B cell (primary cell): ENCODE measurements at regions of chr5 and their contacts with region 1.

Region 1: DNA sequence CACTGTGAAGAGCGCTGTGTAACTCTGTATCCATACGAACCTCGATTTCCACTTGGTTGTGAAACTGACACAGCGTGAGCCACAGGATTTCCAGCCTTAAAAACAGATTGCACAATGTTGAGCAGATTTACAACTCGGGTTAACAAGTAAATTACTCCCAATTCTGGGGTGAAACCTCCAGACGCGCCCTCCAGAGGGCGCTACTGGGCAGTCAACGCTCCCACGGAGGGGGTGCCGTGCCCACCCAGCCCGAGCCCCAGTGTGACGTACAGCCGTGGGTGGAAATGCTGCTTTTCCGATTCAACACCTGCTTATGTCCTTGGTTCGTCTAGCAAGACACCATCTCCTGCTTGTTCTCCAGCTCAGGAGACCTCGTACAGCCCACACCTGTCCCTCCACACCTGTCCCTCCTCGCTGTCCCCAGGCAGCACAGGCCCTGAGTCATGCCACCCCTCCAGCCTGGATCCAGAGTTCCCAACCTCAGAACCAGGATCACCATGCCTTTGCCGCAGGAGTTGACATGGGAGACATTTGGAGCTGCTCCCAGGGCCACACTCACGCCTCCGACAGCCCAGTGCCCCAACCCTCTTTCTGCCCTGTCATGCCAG is 34.4 kb upstream of the SLC6A3 start:
- DNase-seq: peak; percentile 89
- ATAC-seq: peak; percentile 64
- H3K4me3 ChIP-seq: no peak overlapping the region
- H3K4me3 Mint-ChIP-seq: peak overlapping the region; percentile 76
- H3K27ac ChIP-seq: peak overlapping the region; percentile 66 to 84
- H3K27ac Mint-ChIP-seq: peak overlapping the region; percentile 94
- H3K4me1 ChIP-seq: peaks cover 48 to 55% of the 10 kb centered on the region in 2 donors
- H3K4me1 Mint-ChIP-seq: peaks cover 52% of the 10 kb centered on the region
- H3K27me3 ChIP-seq: no peaks in the 10 kb centered on the region
- H3K27me3 Mint-ChIP-seq: no peaks in the 10 kb centered on the region
- CTCF ChIP-seq: peak; percentile 88

Region 2: DNA sequence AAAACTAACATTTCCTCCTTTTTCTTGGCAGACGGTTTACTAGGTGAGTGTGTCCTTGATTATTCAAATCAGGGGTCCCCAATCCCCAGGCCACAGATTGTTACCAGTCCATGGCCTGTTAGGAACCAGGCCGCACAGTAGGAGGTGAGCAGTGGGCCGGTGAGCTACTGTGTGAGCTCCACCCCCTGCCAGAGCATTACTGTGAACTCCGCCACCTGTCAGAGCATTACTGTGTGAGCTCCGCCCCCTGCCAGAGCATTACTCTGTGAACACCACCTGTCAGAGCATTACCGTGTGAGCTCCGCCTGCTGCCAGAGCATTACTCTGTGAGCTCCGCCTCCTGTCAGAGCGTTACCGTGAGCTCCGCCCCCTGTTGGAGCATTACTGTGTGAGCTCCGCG is 1222.5 kb before region 1 on chr5:
- CTCF ChIA-PET with region 1: no interaction called
- POLR2A ChIA-PET with region 1: no interaction called
- intact Hi-C with region 1: no loop called
- DNase-seq: no peak
- ATAC-seq: no peak
- H3K4me3 ChIP-seq: no peak overlapping the region
- H3K4me3 Mint-ChIP-seq: no peak overlapping the region
- H3K27ac ChIP-seq: no peak overlapping the region
- H3K27ac Mint-ChIP-seq: no peak overlapping the region
- H3K4me1 ChIP-seq: peaks cover 0 to 2% of the 10 kb centered on the region in 2 donors
- H3K4me1 Mint-ChIP-seq: peaks cover 7% of the 10 kb centered on the region
- H3K27me3 ChIP-seq: no peaks in the 10 kb centered on the region
- H3K27me3 Mint-ChIP-seq: no peaks in the 10 kb centered on the region
- CTCF ChIP-seq: no peak

Region 3: GRCh38 chr5:1494780-1495524 is 15.3 kb after region 1 on chr5:
- CTCF ChIA-PET with region 1: interaction called, 27 read pairs
- POLR2A ChIA-PET with region 1: interaction called, 17 read pairs
- intact Hi-C with region 1: no loop called
- DNase-seq: peak; percentile 91
- ATAC-seq: peak; percentile 72
- H3K4me3 ChIP-seq: peak overlapping the region in 4 of 5 experiments; percentile 41 to 60 (median 55)
- H3K4me3 Mint-ChIP-seq: peak overlapping the region; percentile 87
- H3K27ac ChIP-seq: peak overlapping the region; percentile 95 to 96
- H3K27ac Mint-ChIP-seq: peak overlapping the region; percentile 98
- H3K4me1 ChIP-seq: peaks cover 90 to 99% of the 10 kb centered on the region in 2 donors
- H3K4me1 Mint-ChIP-seq: peaks cover 99% of the 10 kb centered on the region
- H3K27me3 ChIP-seq: no peaks in the 10 kb centered on the region
- H3K27me3 Mint-ChIP-seq: no peaks in the 10 kb centered on the region
- CTCF ChIP-seq: peak; percentile 16

Region 4: DNA sequence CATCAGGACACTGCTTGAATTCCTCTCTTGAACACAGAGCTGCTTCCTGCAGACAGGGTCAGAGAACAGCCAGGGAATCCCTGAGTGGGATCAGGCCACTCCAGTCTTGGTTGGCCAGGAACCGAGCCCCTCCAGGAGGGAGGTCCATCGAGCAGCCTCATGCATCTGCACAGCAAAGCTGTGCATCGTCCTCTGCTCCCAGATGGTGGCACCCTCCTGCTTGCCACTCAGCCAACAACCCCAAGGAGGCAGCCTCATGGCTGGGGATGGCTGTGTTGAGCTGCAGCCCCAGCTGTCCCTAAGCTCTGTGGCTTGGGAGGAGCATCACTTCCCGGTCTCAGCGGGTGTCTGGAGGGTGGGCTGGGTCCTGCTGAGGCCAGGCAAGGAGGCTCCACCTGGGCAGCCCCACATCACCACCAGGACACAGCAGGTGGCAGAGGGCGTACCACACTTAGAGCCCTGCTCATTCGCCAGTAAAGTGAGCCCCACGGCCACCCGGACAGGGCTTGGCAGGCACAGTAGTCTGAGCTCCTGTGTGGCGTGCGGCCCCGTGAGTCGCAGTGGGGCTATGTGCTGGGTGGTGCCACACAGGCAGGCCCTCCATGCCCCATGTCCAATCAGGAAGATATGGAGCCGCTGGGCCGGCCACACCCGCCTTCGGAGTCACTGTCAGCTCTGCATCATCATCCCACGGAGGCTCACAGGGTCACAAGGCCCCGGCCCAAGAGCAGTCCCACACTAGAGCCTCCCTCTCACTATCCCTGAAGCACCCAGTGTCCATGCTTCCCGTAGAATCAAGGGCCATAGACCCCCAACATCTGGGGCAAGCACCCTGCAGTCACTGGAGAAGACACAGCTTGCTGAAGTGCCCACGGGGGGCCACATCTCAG is 32.2 kb after region 1 on chr5:
- CTCF ChIA-PET with region 1: interaction called, 11 read pairs
- POLR2A ChIA-PET with region 1: interaction called, 4 read pairs
- intact Hi-C with region 1: no loop called
- DNase-seq: peak; percentile 61
- ATAC-seq: peak; percentile 54
- H3K4me3 ChIP-seq: no peak overlapping the region
- H3K4me3 Mint-ChIP-seq: no peak overlapping the region
- H3K27ac ChIP-seq: peak overlapping the region in 1 of 2 donors; percentile 43
- H3K27ac Mint-ChIP-seq: peak overlapping the region; percentile 33
- H3K4me1 ChIP-seq: peaks cover 14 to 38% of the 10 kb centered on the region in 2 donors
- H3K4me1 Mint-ChIP-seq: peaks cover 44% of the 10 kb centered on the region
- H3K27me3 ChIP-seq: no peaks in the 10 kb centered on the region
- H3K27me3 Mint-ChIP-seq: no peaks in the 10 kb centered on the region
- CTCF ChIP-seq: no peak

Region 5: DNA sequence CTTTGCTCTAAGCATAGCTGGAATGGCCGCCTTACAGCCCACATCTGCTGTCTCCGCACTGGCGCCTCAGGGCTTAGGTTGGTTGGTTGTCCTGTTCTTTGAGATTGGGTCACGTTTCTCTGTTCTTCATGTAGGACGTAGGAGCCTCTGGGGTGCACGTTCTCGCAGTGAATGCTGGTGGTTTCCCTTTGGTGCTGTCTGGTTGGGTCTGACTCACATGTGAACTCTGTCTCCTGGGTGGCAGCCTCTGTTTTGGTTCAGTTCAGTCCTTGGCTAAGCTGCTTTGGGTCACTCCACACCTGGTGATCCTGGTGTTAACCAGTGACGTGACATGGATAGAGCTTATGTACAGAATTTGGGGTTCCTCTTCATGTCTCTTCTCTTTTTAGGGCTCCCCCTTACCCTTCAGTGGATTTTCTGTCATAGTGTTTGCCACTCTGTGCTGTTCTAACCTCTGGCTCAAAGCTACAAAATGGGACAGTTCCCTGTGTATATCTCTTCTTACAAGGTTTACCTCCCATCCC is 56.7 kb after region 1 on chr5:
- CTCF ChIA-PET with region 1: interaction called, 10 read pairs
- POLR2A ChIA-PET with region 1: interaction called, 3 read pairs
- intact Hi-C with region 1: loop called (anchors 1 kb)
- DNase-seq: peak; percentile 89
- ATAC-seq: peak; percentile 96
- H3K4me3 ChIP-seq: peak overlapping the region; percentile 35 to 81 (median 47)
- H3K4me3 Mint-ChIP-seq: peak overlapping the region; percentile 71
- H3K27ac ChIP-seq: peak overlapping the region; percentile 85 to 98
- H3K27ac Mint-ChIP-seq: peak overlapping the region; percentile 95
- H3K4me1 ChIP-seq: peaks cover 19% of the 10 kb centered on the region in 2 donors
- H3K4me1 Mint-ChIP-seq: peaks cover 32% of the 10 kb centered on the region
- H3K27me3 ChIP-seq: no peaks in the 10 kb centered on the region
- H3K27me3 Mint-ChIP-seq: no peaks in the 10 kb centered on the region
- CTCF ChIP-seq: no peak

Region 6: DNA sequence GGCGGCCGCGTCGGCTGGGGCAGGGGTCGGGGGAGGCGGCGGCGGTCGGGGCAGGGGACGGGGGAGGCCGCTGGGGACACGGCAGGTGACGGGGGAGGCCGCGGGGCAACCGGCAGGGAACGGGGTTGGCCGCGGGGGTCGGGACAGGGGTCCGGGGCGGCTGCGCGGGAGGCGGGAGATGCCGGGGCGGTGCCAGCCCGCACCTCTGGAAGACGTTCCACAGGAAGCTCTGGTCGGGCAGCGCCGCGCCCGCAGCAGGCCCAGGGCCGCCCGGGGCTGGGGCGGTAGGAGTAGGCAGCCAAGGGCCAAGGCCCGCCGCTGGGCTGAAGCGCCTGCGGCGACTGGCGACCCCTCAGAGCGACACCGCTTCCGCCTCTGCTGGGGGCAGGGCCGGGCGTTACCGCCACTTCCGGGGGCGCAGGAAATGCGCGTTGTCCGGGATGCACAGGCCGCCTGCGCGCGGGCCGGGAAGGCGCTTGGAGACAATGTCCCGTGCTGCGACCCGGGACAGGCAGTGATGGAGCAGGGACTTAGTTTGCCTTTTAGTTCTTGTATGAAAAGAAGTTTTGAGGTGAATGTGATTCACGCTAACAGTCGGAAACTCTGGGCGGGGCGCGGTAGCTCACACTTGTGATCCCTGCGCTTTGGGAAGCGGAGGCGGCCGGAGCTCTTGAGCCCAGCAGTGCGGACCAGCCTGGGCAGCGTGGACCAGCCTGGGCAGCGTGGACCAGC is 154.1 kb after region 1 on chr5:
- CTCF ChIA-PET with region 1: interaction called, 4 read pairs
- POLR2A ChIA-PET with region 1: interaction called, 6 read pairs
- intact Hi-C with region 1: loop called (anchors 1 kb)
- DNase-seq: peak; percentile 88
- ATAC-seq: peak; percentile 93
- H3K4me3 ChIP-seq: peak overlapping the region in 4 of 5 experiments; percentile 77 to 98 (median 80)
- H3K4me3 Mint-ChIP-seq: peak overlapping the region; percentile 97
- H3K27ac ChIP-seq: peak overlapping the region; percentile 69 to 79
- H3K27ac Mint-ChIP-seq: peak overlapping the region; percentile 94
- H3K4me1 ChIP-seq: peaks cover 0 to 5% of the 10 kb centered on the region in 2 donors
- H3K4me1 Mint-ChIP-seq: peaks cover 30% of the 10 kb centered on the region
- H3K27me3 ChIP-seq: no peaks in the 10 kb centered on the region
- H3K27me3 Mint-ChIP-seq: no peaks in the 10 kb centered on the region
- CTCF ChIP-seq: no peak